Activated CD4-positive, alpha-beta memory T cell treated with anti-CD3 and anti-CD28 coated beads, Interleukin-2, amount 10 ng/mL, durations not matched to agents 7 days and 5 days (primary cell): ENCODE measurements at regions of chr15 and their contacts with region 1.

Region 1: DNA sequence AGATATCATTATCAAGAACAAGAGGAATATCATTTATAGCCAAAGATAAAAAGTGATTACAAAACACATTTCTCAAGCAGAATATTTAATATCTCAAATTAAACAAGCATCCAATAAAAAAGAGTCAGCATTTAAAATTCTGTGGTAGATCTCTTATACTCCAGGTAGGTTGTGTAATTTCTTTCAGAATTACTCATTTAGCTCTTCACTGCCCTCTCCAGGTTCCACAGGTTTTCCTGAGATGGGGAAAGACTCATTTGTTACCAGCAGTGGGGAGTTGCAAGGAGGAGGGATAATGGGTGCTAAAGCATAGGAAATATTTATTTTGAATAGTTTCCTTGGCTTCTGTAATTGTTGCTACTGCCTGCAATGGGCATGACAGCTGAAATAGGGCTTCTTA is 83.1 kb upstream of the RASGRP1 start:
- DNase-seq: no peak
- H3K4me3 Mint-ChIP-seq: no peak overlapping the region
- H3K27ac Mint-ChIP-seq: no peak overlapping the region
- H3K4me1 Mint-ChIP-seq: peaks cover 63% of the 10 kb centered on the region
- H3K27me3 Mint-ChIP-seq: no peaks in the 10 kb centered on the region

Region 2: DNA sequence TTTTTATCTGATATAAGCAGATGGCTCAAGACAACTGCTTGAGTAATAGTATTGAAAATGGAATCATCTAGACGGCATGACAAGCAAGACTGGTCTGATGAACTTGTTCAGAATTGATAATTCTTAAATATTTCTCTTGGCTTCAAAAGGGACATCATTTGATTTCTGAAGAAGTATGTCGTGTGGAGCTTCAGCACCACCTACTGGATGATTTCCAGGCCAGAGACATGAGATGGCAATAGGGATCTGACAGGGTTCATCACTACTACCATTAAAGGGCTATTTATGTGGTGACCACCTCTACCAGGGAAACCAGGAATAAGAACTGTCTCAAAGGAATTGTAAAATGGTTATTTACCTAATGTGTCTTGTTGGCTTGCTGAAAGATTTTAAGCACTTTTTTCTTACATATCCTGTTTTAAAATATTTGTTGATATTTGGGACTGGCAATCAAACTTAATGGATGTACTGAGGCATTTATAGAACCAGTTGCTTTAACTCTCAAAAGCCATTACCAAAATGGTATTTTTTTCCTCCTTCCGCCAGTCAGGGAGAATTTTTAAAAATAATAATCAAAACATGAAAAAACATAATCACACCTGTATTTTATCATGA is 293.3 kb before region 1 on chr15:
- CTCF ChIA-PET with region 1: no interaction called
- POLR2A ChIA-PET with region 1: no interaction called
- DNase-seq: peak; percentile 56
- H3K4me3 Mint-ChIP-seq: no peak overlapping the region
- H3K27ac Mint-ChIP-seq: no peak overlapping the region
- H3K4me1 Mint-ChIP-seq: no peaks in the 10 kb centered on the region
- H3K27me3 Mint-ChIP-seq: peaks cover 26% of the 10 kb centered on the region

Region 3: DNA sequence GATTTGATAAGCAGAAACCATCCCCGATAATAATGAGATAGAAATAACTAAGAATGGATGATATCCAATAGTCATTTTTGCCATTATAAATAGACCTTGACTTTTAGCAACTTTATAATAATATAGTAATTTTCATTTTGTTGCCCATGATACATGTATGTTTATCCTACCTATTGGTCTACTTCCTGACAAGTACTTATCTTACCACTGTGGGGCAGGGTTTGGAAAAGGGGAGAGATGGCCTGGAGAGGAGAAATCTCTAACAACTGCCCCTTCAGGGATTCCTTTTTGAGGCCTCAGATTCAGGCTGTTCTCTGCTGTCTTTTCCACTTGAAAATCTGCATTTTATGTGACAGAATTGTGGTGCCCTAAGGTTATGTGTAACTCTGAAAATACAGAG is 151.5 kb before region 1 on chr15:
- CTCF ChIA-PET with region 1: no interaction called
- POLR2A ChIA-PET with region 1: no interaction called
- DNase-seq: no peak
- H3K4me3 Mint-ChIP-seq: no peak overlapping the region
- H3K27ac Mint-ChIP-seq: no peak overlapping the region
- H3K4me1 Mint-ChIP-seq: peaks cover 28% of the 10 kb centered on the region
- H3K27me3 Mint-ChIP-seq: no peaks in the 10 kb centered on the region

Region 4: GRCh38 chr15:38554354-38554753 is 93.3 kb before region 1 on chr15:
- CTCF ChIA-PET with region 1: interaction called, 224 read pairs
- POLR2A ChIA-PET with region 1: interaction called, 495 read pairs
- DNase-seq: no peak
- H3K4me3 Mint-ChIP-seq: no peak overlapping the region
- H3K27ac Mint-ChIP-seq: peak overlapping the region; percentile 92
- H3K4me1 Mint-ChIP-seq: peaks cover 88% of the 10 kb centered on the region
- H3K27me3 Mint-ChIP-seq: no peaks in the 10 kb centered on the region

Region 5: GRCh38 chr15:38610748-38611147 is 36.9 kb before region 1 on chr15:
- CTCF ChIA-PET with region 1: interaction called, 43 read pairs
- POLR2A ChIA-PET with region 1: interaction called, 202 read pairs
- DNase-seq: peak; percentile 65
- H3K4me3 Mint-ChIP-seq: peak overlapping the region; percentile 61
- H3K27ac Mint-ChIP-seq: peak overlapping the region; percentile 99
- H3K4me1 Mint-ChIP-seq: peaks cover 71% of the 10 kb centered on the region
- H3K27me3 Mint-ChIP-seq: no peaks in the 10 kb centered on the region

Region 6: DNA sequence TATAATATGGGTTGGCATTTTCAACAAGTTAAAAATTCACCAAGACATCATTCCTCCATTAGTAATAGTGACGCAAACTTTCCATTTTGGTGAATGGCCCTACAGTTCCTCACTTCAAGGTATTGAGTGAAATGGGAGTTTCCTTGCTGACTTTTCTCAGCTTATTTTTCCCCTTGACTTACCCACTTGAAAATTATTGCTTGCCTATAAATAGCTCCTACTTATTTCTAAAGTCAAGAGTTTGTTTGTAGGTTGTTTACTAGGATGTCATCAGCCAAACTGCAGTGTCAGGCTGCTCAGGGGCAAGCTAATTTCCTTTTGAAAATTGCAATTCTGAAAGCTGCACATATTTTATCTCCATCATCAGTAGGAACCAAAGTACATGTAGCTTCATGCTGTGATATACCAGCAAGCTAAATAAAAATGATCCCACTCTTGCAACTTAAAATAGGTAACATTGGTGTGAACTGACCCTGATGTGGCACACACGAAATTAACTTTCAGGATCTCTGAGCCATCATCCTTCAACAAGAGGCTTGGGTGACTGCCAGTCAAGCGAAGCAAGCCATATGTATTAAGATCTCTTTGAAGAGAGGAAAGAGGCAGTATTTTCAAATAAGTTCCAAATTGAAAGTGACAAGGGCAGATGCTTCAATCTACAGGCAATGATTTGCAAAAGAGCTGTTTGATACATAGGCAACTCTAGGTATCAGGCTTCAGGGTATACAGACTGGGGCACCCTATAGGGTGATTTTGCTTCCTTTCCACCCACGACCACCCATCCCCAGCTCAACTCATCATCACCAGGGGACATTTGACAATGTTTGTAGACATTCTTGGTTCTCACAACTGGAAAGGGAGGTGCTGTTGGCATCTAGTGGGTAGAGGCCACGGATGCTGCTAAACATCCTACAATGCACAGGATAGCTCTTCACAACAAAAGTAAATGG is 16.3 kb before region 1 on chr15:
- CTCF ChIA-PET with region 1: interaction called, 14 read pairs
- POLR2A ChIA-PET with region 1: interaction called, 55 read pairs
- DNase-seq: no peak
- H3K4me3 Mint-ChIP-seq: no peak overlapping the region
- H3K27ac Mint-ChIP-seq: peak overlapping the region; percentile 61
- H3K4me1 Mint-ChIP-seq: peaks cover 25% of the 10 kb centered on the region
- H3K27me3 Mint-ChIP-seq: no peaks in the 10 kb centered on the region

Region 7: GRCh38 chr15:38665586-38666305 is 18.1 kb after region 1 on chr15:
- CTCF ChIA-PET with region 1: interaction called, 64 read pairs
- POLR2A ChIA-PET with region 1: interaction called, 497 read pairs
- DNase-seq: no peak
- H3K4me3 Mint-ChIP-seq: no peak overlapping the region
- H3K27ac Mint-ChIP-seq: no peak overlapping the region
- H3K4me1 Mint-ChIP-seq: peaks cover 74% of the 10 kb centered on the region
- H3K27me3 Mint-ChIP-seq: no peaks in the 10 kb centered on the region

Region 8: DNA sequence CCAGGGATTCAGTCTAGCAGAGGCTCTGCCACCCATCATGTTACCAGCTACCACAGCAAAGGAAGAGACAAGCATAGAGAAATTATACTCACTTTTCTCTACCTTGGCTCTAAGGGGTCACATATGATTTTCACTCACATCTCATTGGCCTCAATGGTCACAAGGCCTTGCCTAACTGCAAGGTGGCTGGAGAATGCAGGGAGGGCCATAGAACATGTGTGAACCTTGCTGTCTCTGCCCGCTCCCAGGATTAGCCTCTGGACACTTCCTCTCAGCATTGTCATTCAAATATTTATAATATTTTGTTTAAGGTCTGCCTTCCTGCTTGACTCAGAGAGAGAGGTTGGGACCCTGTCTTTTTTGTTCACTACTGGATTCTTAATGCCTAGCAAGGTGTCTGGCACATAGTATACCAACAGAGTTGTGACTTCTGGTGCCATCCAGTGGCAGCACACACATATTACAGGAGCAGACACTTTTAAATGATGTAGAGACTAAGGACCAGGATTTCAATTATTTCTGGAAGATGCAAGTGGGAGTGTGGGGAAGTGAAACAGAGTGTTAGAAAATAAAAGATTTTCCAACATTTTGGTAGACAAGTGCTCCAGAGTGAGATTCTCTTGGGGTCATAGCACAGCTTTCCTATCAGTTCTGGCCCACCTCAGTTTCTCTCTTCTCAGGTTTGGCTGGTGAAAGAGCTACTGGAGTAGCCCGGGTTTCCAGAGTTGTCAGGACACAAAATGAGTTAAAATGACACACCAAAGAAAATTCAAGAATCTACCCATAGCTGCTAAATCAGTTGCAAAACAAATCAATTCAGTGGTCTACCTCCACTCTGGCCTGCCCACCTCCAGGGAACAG is 35.9 kb after region 1 on chr15:
- CTCF ChIA-PET with region 1: interaction called, 311 read pairs
- POLR2A ChIA-PET with region 1: interaction called, 376 read pairs
- DNase-seq: peak; percentile 81
- H3K4me3 Mint-ChIP-seq: peak overlapping the region; percentile 54
- H3K27ac Mint-ChIP-seq: peak overlapping the region; percentile 99
- H3K4me1 Mint-ChIP-seq: peaks cover 75% of the 10 kb centered on the region
- H3K27me3 Mint-ChIP-seq: no peaks in the 10 kb centered on the region